Activated T-helper 2 cell treated with anti-CD3 and anti-CD28 coated beads, Interferon-gamma antibody, Interleukin-2, Interleukin-4, amounts not matched to agents 10 μg/mL and 5 μg/mL and 100 μg/mL, durations not matched to agents 14 hours and 24 hours and 36 hours (primary cell): ENCODE measurements at regions of chr15 and their contacts with region 1.

Region 1: GRCh38 chr15:71114896-71115554 is at the start of gene THSD4:
- DNase-seq: peak; percentile 56
- H3K4me3 Mint-ChIP-seq: peak within 1 kb of the TSS; percentile 70
- H3K27ac Mint-ChIP-seq: no peak within 1 kb of the TSS
- H3K4me1 Mint-ChIP-seq: peaks cover 8% of the 10 kb centered on the region
- H3K27me3 Mint-ChIP-seq: peaks cover 37% of the 10 kb centered on the region
- total RNA-seq, gene THSD4: 0.07 TPM in 1 of 2 replicates, not detected in the other

Region 2: DNA sequence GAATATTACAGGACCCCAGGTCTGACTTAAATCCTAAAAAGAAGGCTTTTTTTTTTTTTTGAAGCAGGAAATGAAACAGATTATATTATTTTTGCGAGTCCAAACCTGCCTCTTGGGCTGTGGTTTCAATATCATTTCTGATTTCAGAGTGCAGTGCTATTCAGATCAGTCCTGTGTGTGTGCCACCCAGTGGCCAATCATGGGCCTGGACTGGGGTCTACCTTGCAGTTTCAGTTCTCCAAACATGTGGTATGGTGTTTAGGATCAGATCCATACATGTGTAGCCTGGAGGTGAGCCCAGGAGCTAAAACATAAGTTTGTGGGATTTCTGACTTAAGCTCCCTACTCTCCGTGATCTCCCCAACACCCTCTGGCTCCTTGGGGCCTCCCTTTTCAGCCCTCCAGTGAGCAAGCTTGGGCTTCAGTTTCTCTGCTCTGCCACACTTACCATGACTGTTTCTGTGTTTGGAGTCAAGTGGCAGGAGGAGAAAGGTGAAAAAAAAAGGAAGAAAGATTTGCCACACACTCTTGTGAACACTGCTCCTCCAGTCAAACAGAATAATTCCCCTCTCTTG is 11.8 kb before region 1 on chr15:
- intact Hi-C with region 1: no loop called
- DNase-seq: no peak
- H3K4me3 Mint-ChIP-seq: no peak overlapping the region
- H3K27ac Mint-ChIP-seq: no peak overlapping the region
- H3K4me1 Mint-ChIP-seq: peaks cover 3% of the 10 kb centered on the region
- H3K27me3 Mint-ChIP-seq: no peaks in the 10 kb centered on the region

Region 3: GRCh38 chr15:71440489-71441110 is 325.6 kb after region 1 on chr15:
- intact Hi-C with region 1: loop called (anchors 1 kb)
- DNase-seq: no peak
- H3K4me3 Mint-ChIP-seq: no peak overlapping the region
- H3K27ac Mint-ChIP-seq: no peak overlapping the region
- H3K4me1 Mint-ChIP-seq: no peaks in the 10 kb centered on the region
- H3K27me3 Mint-ChIP-seq: peaks cover 10% of the 10 kb centered on the region